Ovary (tissue), 10 donors: ENCODE measurements at regions of chr13 and their contacts with region 1.

Region 1: DNA sequence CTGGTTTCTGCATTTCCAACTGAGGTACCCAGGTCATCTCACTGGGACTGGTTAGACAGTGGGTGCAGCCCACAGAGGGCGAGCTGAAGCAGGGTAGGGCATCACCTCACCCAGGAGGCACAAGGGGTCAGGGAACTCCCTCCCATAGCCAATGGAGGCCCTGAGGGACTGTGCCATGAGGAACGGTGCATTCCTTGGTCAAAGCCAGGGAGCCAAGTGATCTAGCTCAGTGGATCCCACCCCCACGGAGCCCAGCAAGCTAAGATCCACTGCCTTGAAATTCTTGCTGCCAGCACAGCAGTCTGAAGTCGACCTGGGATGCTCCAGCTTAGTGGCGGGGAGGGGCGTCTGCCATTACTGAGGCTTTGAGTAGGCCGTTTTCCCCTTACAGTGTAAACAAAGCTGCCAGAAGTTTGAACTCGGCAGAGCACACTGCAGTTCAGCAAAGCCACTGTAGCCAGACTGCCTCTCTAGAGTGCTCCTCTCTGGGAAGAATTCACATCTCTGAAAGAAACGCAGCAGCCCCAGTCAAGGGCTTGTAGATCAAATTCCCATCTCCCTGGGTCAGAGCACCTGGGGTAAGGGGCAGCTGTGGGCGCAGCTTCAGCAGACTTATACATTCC is 1386.6 kb upstream of the PCDH9 start:
- DNase-seq: no peak
- H3K4me3 ChIP-seq: no peak overlapping the region
- H3K27ac ChIP-seq: no peak overlapping the region
- H3K4me1 ChIP-seq: no peaks in the 10 kb centered on the region
- H3K27me3 ChIP-seq: no peaks in the 10 kb centered on the region
- CTCF ChIP-seq: no peak
- EP300 ChIP-seq: no peak
- POLR2A ChIP-seq: no peak

Region 2: GRCh38 chr13:66794340-66795031 is 1822.2 kb before region 1 on chr13:
- intact Hi-C with region 1: loop called in 1 of 4 experiments (anchors 5 kb)
- DNase-seq: no peak
- H3K4me3 ChIP-seq: no peak overlapping the region
- H3K27ac ChIP-seq: no peak overlapping the region
- H3K4me1 ChIP-seq: no peaks in the 10 kb centered on the region
- H3K27me3 ChIP-seq: no peaks in the 10 kb centered on the region
- CTCF ChIP-seq: no peak
- EP300 ChIP-seq: no peak
- POLR2A ChIP-seq: no peak

Region 3: DNA sequence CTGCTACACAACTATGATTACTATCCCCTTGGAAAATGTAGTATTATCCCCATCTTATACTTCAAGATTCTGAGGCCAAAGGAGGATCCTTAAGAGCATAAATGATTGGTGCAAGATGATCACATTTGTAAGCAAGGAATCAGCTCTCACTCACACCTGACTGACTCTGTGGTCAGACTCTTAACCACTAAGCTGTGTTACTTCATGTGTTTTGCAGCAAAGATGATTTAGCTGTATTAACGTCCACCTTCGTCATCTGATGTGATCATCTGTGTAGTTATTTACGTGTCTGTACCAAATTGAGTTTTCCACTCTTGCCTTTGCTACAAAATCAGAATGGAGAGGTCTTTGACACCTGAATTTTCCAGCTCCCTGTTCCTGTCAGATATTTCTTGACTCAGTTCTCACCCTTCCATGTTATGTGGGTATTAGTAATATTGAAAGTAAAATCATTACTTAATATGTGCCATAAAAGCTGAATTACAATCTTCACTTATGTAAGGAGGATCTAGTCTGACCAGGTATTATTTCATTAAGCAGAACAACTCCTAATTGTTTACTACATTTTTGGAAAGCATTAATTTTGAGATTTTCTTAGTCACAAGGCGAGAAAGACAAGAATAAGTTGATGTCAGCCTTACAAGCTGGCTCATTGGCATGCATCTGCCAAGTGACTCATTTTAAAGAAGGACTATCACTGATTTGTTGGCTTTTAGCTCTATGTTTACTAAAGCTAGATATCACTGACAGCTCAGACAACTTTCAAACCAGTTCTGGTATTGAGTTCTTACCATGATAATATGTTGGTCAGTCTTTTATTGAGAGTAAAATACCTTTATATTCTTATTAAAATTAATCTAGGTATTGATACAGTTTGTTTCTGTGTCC is 106.7 kb before region 1 on chr13:
- intact Hi-C with region 1: no loop called
- DNase-seq: no peak
- H3K4me3 ChIP-seq: no peak overlapping the region
- H3K27ac ChIP-seq: no peak overlapping the region
- H3K4me1 ChIP-seq: no peaks in the 10 kb centered on the region
- H3K27me3 ChIP-seq: no peaks in the 10 kb centered on the region
- CTCF ChIP-seq: no peak
- EP300 ChIP-seq: no peak
- POLR2A ChIP-seq: no peak